ENCODE measurements at regions of chr13 and their contacts with region 1.

Region 1: DNA sequence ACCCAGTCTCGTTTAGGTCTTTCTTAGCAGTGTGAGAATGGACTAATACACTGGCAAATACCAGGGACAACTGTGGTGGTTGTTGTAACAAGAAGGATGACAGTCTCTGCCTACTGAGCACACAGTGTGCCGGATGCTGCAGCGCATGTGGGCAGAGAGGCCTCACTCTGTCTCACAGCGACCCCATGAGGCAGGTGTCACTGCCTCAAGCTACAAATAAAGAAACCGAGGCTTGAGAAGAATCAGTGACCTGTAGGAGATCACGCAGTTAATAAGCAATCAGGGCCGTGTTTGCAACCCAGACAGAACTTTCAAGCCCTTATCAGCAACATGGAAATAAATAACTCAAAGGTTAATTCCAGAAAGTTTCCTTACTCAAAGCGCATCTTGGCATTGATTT is 40.5 kb upstream of the GAS6 start:
- DNase-seq: no peak
- H3K4me3 ChIP-seq: no peak overlapping the region
- H3K27ac ChIP-seq: no peak overlapping the region
- H3K4me1 ChIP-seq: peaks cover 4% of the 10 kb centered on the region
- H3K27me3 ChIP-seq: no peaks in the 10 kb centered on the region
- CTCF ChIP-seq: peak; percentile 45 to 69

Region 2: DNA sequence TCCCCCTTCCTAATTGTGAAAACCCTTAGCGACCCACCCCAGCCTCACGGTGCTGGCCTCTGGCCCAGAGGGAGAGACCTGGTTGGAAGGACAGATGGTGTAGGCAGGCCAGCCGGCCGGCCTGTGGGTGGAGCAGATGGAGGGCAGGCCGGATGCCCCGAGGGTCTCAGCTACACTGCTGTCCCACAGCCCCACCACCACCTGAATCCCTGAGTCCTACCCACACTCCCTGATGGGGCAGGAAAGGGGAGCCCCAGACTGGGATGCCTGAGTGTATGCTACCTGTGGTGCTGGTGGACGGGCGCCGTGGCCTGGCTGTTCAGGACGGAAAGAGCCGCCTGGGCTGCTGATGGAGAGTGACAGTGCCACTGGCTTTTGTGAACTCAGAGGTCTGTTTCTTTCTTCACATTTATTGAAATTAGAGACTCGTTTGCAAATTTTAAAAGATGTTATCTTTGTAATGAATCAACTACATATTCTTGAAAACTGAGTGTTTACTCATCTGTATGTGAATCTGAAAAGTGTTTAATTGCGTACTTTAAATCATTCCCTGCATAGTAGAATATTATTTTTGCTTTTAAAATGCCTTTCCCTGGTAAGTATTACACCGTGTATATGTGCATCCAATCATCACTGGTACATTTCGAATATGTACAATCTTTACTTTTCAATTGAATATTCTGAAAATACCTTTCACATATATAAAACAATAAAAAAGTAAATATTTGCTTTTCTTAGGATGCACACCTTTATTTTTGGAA is 284.2 kb before region 1 on chr13:
- CTCF ChIA-PET with region 1: no interaction called
- dilution Hi-C with region 1: no loop called
- in situ Hi-C with region 1: no loop called
- intact Hi-C with region 1: loop called (anchors 2 kb)
- DNase-seq: no peak
- H3K4me3 ChIP-seq: no peak overlapping the region
- H3K27ac ChIP-seq: no peak overlapping the region
- H3K4me1 ChIP-seq: no peaks in the 10 kb centered on the region
- H3K27me3 ChIP-seq: no peaks in the 10 kb centered on the region
- CTCF ChIP-seq: no peak

Region 3: GRCh38 chr13:113630804-113631203 is 273.6 kb before region 1 on chr13:
- CTCF ChIA-PET with region 1: no interaction called
- dilution Hi-C with region 1: no loop called
- in situ Hi-C with region 1: no loop called
- intact Hi-C with region 1: no loop called
- DNase-seq: no peak
- H3K4me3 ChIP-seq: no peak overlapping the region
- H3K27ac ChIP-seq: no peak overlapping the region
- H3K4me1 ChIP-seq: no peaks in the 10 kb centered on the region
- H3K27me3 ChIP-seq: no peaks in the 10 kb centered on the region
- CTCF ChIP-seq: no peak

Region 4: DNA sequence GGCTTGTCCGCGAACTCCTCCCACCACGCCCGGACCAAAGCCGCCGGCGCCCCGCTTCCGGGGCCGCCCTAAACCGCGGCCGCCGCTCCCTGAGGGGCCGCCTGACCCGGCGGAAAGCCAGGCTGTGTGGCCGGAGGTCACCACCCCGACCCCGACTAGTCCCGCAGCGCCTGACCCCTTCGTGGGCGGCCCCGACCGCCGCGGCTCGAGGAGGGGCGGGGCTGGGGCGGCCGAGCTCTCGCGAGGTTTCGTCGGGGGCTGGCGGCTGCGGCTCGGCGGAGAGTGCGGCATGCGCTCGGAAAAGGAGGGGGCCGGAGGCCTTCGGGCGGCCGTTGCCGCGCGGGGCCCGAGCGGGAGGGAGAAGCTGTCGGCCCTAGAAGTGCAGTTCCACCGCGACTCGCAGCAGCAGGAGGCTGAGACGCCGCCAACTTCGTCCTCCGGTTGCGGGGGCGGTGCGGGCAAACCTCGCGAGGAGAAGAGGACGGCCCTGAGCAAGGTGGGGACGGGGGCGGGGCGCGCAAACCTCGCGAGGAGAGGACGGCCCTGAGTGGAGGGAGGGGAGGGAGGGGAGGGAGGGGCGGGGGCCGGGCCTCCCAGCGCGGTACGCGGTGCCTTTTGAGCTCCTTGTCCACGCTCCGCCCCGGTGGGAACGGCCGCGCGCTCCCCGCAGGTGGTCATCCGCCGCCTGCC is 377.1 kb after region 1 on chr13 and contains the start of gene UPF3A:
- CTCF ChIA-PET with region 1: interaction called, 11 read pairs
- dilution Hi-C with region 1: no loop called
- in situ Hi-C with region 1: no loop called
- intact Hi-C with region 1: no loop called
- DNase-seq: peak; percentile 87
- H3K4me3 ChIP-seq: peak within 1 kb of the TSS; percentile 84 to 97 (median 91)
- H3K27ac ChIP-seq: peak within 1 kb of the TSS; percentile 94
- H3K4me1 ChIP-seq: peaks cover 9% of the 10 kb centered on the region
- H3K27me3 ChIP-seq: no peaks in the 10 kb centered on the region
- CTCF ChIP-seq: no peak
- total RNA-seq, gene UPF3A: 17.8 to 36.3 TPM